ENCODE measurements at regions of chr1 and their contacts with region 1.

Region 1: GRCh38 chr1:42873670-42874069 is 27.3 kb downstream of the ZNF691 start:
- DNase-seq: no peak
- H3K4me3 ChIP-seq: no peak overlapping the region
- H3K4me3 Mint-ChIP-seq: no peak overlapping the region
- H3K27ac Mint-ChIP-seq: no peak overlapping the region
- H3K4me1 ChIP-seq: no peaks in the 10 kb centered on the region
- H3K4me1 Mint-ChIP-seq: no peaks in the 10 kb centered on the region
- H3K27me3 ChIP-seq: no peaks in the 10 kb centered on the region
- H3K27me3 Mint-ChIP-seq: peaks cover 6% of the 10 kb centered on the region
- CTCF ChIP-seq: no peak

Region 2: DNA sequence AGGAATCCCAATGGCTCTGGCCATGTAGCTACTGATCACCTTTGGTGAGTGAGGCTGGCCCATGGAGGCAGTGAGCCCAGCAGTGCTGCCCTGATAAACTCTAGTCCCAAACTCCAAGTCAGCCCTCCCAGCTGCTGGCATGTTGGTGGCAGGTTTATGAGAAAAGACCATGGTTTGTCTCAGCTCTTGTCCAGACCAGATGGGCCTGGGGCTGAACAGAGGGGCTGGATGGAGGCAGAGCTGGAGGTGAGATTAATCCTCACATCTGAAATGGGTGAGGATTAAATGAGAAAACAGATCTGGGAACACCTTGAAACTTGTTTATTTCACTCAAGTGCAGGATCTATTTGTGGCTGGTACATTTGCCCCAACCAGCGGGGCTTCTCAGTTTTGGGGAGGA is 85.6 kb before region 1 on chr1:
- CTCF ChIA-PET with region 1: no interaction called
- POLR2A ChIA-PET with region 1: interaction called, 11 read pairs
- intact Hi-C with region 1: no loop called
- DNase-seq: no peak
- H3K4me3 ChIP-seq: no peak overlapping the region
- H3K4me3 Mint-ChIP-seq: no peak overlapping the region
- H3K27ac Mint-ChIP-seq: no peak overlapping the region
- H3K4me1 ChIP-seq: no peaks in the 10 kb centered on the region
- H3K4me1 Mint-ChIP-seq: no peaks in the 10 kb centered on the region
- H3K27me3 ChIP-seq: no peaks in the 10 kb centered on the region
- H3K27me3 Mint-ChIP-seq: no peaks in the 10 kb centered on the region
- CTCF ChIP-seq: no peak

Region 3: DNA sequence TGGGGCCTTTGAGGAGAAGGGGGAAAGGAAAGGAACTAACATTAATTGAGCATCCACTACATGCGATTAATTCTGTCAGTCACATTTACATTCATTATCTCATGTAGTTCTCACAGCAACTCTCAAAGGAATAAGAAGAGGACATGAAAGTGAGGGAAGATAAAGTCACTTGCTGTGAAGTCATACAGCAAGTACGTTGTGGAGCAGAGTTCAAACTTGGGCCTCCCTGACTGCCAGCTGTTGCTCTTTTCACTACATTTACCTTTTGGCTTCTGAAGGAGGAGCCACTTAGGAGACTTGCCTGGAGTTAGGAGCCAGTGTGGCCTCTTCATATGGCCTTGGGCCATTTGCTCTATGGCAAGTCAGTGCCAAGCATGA is 21.1 kb before region 1 on chr1:
- CTCF ChIA-PET with region 1: no interaction called
- POLR2A ChIA-PET with region 1: no interaction called
- intact Hi-C with region 1: no loop called
- DNase-seq: no peak
- H3K4me3 ChIP-seq: no peak overlapping the region
- H3K4me3 Mint-ChIP-seq: no peak overlapping the region
- H3K27ac Mint-ChIP-seq: no peak overlapping the region
- H3K4me1 ChIP-seq: no peaks in the 10 kb centered on the region; the same call in 1 of the 2 replicates
- H3K4me1 Mint-ChIP-seq: peaks cover 2% of the 10 kb centered on the region
- H3K27me3 ChIP-seq: no peaks in the 10 kb centered on the region
- H3K27me3 Mint-ChIP-seq: no peaks in the 10 kb centered on the region
- CTCF ChIP-seq: no peak